Mammary epithelial cell (primary cell): ENCODE measurements at regions of chr7 and their contacts with region 1.

Region 1: GRCh38 chr7:44646176-44646920 is 39.9 kb downstream of the OGDH start:
- DNase-seq: no peak
- H3K4me3 ChIP-seq: no peak overlapping the region
- H3K27ac ChIP-seq: no peak overlapping the region
- H3K4me1 ChIP-seq: no peaks in the 10 kb centered on the region
- H3K27me3 ChIP-seq: no peaks in the 10 kb centered on the region
- CTCF ChIP-seq: no peak

Region 2: GRCh38 chr7:44534501-44534900 is 111.8 kb before region 1 on chr7:
- CTCF ChIA-PET with region 1: no interaction called
- dilution Hi-C with region 1: no loop called
- in situ Hi-C with region 1: no loop called
- intact Hi-C with region 1: no loop called
- DNase-seq: peak; percentile 8
- H3K4me3 ChIP-seq: no peak overlapping the region
- H3K27ac ChIP-seq: no peak overlapping the region
- H3K4me1 ChIP-seq: peaks cover 4% of the 10 kb centered on the region
- H3K27me3 ChIP-seq: no peaks in the 10 kb centered on the region
- CTCF ChIP-seq: peak; percentile 49 to 63

Region 3: GRCh38 chr7:44581879-44582603 is 64.3 kb before region 1 on chr7 and contains the start of gene TMED4:
- CTCF ChIA-PET with region 1: no interaction called
- dilution Hi-C with region 1: loop called (anchors 5 kb)
- in situ Hi-C with region 1: no loop called
- intact Hi-C with region 1: no loop called
- DNase-seq: peak; percentile 97
- H3K4me3 ChIP-seq: peak within 1 kb of the TSS; percentile 62 to 88 (median 72)
- H3K27ac ChIP-seq: peak within 1 kb of the TSS; percentile 76
- H3K4me1 ChIP-seq: peaks cover 12% of the 10 kb centered on the region
- H3K27me3 ChIP-seq: no peaks in the 10 kb centered on the region
- CTCF ChIP-seq: no peak
- total RNA-seq, gene TMED4: 48.2 to 87.9 TPM

Region 4: GRCh38 chr7:44693721-44694285 is 47.5 kb after region 1 on chr7:
- CTCF ChIA-PET with region 1: no interaction called
- dilution Hi-C with region 1: no loop called
- in situ Hi-C with region 1: no loop called
- intact Hi-C with region 1: no loop called
- DNase-seq: peak; percentile 41
- H3K4me3 ChIP-seq: no peak overlapping the region
- H3K27ac ChIP-seq: no peak overlapping the region
- H3K4me1 ChIP-seq: no peaks in the 10 kb centered on the region
- H3K27me3 ChIP-seq: no peaks in the 10 kb centered on the region
- CTCF ChIP-seq: no peak

Region 5: GRCh38 chr7:44784364-44784763 is 138.0 kb after region 1 on chr7:
- CTCF ChIA-PET with region 1: no interaction called
- dilution Hi-C with region 1: no loop called
- in situ Hi-C with region 1: no loop called
- intact Hi-C with region 1: no loop called
- DNase-seq: no peak
- H3K4me3 ChIP-seq: no peak overlapping the region
- H3K27ac ChIP-seq: no peak overlapping the region
- H3K4me1 ChIP-seq: no peaks in the 10 kb centered on the region
- H3K27me3 ChIP-seq: no peaks in the 10 kb centered on the region
- CTCF ChIP-seq: no peak

Region 6: GRCh38 chr7:44847508-44847920 is 201.2 kb after region 1 on chr7:
- CTCF ChIA-PET with region 1: no interaction called
- dilution Hi-C with region 1: no loop called
- in situ Hi-C with region 1: no loop called
- intact Hi-C with region 1: no loop called
- DNase-seq: peak; percentile 83
- H3K4me3 ChIP-seq: peak overlapping the region; percentile 55 to 96 (median 94)
- H3K27ac ChIP-seq: peak overlapping the region; percentile 84
- H3K4me1 ChIP-seq: peaks cover 5% of the 10 kb centered on the region
- H3K27me3 ChIP-seq: no peaks in the 10 kb centered on the region
- CTCF ChIP-seq: peak; percentile 47 to 96